Psoas muscle (tissue), 8 donors: ENCODE measurements at regions of chr19 and their contacts with region 1.

Region 1: DNA sequence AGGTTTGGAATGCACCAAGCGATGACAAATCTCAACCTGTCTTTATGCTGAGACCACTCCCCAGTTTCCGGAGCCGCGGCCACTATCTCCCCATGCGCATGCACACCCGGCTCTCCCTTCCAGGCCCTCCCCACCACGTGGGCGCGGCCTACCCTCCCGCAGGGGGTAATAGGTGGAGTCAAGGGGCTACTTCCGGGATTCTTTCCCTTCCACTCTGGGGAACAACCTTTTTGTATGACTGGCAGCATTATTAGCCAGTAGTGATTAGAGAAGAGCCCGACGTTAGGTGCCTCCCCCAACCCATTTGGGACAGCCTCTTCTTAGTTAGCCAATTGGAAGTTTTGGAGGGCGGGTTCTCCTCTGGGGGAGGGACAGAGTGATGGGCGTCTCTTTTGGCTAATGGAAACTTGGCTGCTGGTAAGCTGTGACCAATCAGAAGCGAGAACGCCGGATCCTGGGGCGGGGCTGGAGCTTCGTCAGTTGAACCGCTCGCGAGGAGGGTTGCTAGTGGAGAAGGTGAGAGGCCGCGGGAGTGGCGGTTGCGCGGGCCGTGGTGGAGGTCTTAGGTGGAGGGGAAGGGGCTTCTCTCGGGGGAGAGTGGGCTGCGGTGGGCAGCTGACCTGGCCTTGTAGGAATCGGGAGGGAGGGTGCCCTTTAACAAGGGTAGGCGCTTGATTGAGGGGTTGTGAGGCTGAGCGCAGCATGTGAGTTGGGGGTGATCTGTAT is at the start of gene CCDC61:
- DNase-seq: peak; percentile 91 to 96
- ATAC-seq: peak; percentile 98 to 99 (median 98)
- H3K4me3 ChIP-seq: peak within 1 kb of the TSS; percentile 75
- H3K27ac ChIP-seq: peak within 1 kb of the TSS; percentile 81
- H3K4me1 ChIP-seq: no peaks in the 10 kb centered on the region
- H3K27me3 ChIP-seq: peaks cover 0 to 7% (median 7%) of the 10 kb centered on the region in 3 donors
- CTCF ChIP-seq: no peak
- total RNA-seq, gene CCDC61: 4.9 to 6.2 (median 5.5) TPM

Region 2: DNA sequence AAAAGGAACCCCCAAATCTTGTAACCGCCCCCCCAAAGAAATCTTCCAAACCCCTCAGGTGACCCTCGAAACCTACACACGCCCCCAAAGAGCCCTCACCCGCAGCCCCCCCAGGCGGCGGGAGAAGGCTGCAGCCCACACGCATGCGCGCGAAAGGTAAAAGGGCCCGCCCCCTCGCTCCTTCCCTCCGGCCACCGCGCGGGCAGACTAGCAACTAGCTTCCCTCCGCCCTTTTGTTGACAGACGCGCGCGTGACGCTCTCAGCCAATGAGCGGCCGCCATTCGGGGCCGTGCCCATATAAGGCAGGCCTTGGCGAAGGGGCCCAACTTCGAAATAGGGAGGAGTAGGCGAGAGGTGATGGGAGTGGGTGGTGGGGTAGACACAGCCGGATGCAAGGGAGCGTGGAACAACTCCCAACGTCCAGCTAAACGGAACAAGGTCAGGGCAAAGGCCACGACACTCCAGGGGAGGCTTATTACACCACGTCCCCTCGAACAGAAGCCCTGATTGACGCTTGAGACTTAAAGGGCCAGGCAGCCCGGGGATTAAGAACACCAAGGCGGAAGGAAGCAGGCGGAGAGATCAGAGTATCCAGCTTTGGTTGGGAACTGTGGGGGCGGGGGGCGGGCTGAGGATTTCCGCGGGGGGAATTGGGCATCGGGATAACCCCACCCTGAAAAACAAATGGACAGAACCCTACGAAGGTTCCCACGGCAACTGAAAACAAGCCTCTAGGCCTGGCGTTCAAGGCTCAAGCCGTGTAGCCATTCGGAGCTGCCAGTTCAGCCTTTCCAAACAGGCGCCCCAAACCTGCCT is 277.8 kb before region 1 on chr19:
- intact Hi-C with region 1: no loop called
- DNase-seq: peak; percentile 99 to 100
- ATAC-seq: peak; percentile 96 to 98 (median 97)
- H3K4me3 ChIP-seq: peak overlapping the region; percentile 84
- H3K27ac ChIP-seq: peak overlapping the region; percentile 94
- H3K4me1 ChIP-seq: peaks cover 14% of the 10 kb centered on the region
- H3K27me3 ChIP-seq: no peaks in the 10 kb centered on the region
- CTCF ChIP-seq: no peak

Region 3: GRCh38 chr19:45927565-45928261 is 67.4 kb before region 1 on chr19:
- intact Hi-C with region 1: loop called in 1 of 2 experiments (anchors 5 kb)
- DNase-seq: peak; percentile 84 to 93
- ATAC-seq: peak; percentile 85 to 99 (median 95)
- H3K4me3 ChIP-seq: peak overlapping the region; percentile 15
- H3K27ac ChIP-seq: no peak overlapping the region
- H3K4me1 ChIP-seq: peaks cover 5% of the 10 kb centered on the region
- H3K27me3 ChIP-seq: peaks cover 0 to 4% (median 0%) of the 10 kb centered on the region in 3 donors
- CTCF ChIP-seq: no peak